Aorta (tissue), 5 donors: ENCODE measurements at regions of chr2 and their contacts with region 1.

Region 1: DNA sequence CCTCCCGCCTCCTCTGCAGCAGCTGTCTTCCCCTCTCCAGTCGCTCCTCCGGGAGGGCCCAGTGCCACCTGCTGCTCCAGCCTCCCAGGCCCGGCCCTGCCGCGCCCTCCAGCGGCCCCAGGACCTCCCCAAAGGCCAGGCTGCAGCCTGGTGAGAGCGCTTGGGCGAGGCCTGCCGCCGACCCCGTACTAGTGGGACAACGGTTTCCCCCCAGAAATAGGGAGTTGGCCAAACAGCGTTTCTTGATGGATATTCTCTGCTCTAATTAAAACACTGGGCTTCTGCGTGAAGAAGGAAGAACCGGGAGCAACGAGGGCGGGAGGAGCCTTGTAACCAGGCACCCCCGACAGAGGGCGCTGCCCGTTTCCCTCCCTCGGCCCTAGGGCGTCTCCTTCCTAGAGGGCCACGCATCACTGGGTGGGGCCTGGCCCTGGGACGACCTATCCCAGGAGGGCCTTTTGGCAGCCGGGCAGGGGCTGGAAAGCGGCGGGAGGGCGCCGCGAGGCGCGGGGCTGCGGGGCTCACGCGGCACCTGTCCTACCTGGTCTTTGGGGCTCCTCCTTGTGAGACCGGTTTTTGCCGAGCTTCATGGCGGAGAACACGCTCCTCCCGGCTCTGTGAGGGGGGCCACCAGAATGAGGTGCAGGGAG is 25.4 kb upstream of the OTOF start:
- DNase-seq: peak; percentile 81 to 91
- ATAC-seq: peak; percentile 86
- H3K4me3 ChIP-seq: peak overlapping the region in 1 of 2 donors; percentile 10
- H3K27ac ChIP-seq: no peak overlapping the region
- H3K4me1 ChIP-seq: no peaks in the 10 kb centered on the region
- H3K27me3 ChIP-seq: no peaks in the 10 kb centered on the region

Region 2: GRCh38 chr2:26269571-26270158 is 233.7 kb before region 1 on chr2:
- intact Hi-C with region 1: no loop called
- DNase-seq: no peak
- ATAC-seq: no peak
- H3K4me3 ChIP-seq: no peak overlapping the region
- H3K27ac ChIP-seq: no peak overlapping the region
- H3K4me1 ChIP-seq: no peaks in the 10 kb centered on the region
- H3K27me3 ChIP-seq: no peaks in the 10 kb centered on the region

Region 3: GRCh38 chr2:26569216-26570082 is 66.1 kb after region 1 on chr2:
- intact Hi-C with region 1: loop called in 1 of 2 experiments (anchors 5 kb)
- DNase-seq: peak; percentile 7 to 48
- ATAC-seq: no peak
- H3K4me3 ChIP-seq: no peak overlapping the region
- H3K27ac ChIP-seq: no peak overlapping the region
- H3K4me1 ChIP-seq: no peaks in the 10 kb centered on the region
- H3K27me3 ChIP-seq: no peaks in the 10 kb centered on the region

Region 4: GRCh38 chr2:26577434-26578112 is 74.2 kb after region 1 on chr2:
- intact Hi-C with region 1: loop called (anchors 5 kb)
- DNase-seq: peak; percentile 79 to 90
- ATAC-seq: peak; percentile 62
- H3K4me3 ChIP-seq: no peak overlapping the region
- H3K27ac ChIP-seq: no peak overlapping the region
- H3K4me1 ChIP-seq: no peaks in the 10 kb centered on the region
- H3K27me3 ChIP-seq: no peaks in the 10 kb centered on the region